ENCODE measurements at regions of chr19 and their contacts with region 1.

Region 1: DNA sequence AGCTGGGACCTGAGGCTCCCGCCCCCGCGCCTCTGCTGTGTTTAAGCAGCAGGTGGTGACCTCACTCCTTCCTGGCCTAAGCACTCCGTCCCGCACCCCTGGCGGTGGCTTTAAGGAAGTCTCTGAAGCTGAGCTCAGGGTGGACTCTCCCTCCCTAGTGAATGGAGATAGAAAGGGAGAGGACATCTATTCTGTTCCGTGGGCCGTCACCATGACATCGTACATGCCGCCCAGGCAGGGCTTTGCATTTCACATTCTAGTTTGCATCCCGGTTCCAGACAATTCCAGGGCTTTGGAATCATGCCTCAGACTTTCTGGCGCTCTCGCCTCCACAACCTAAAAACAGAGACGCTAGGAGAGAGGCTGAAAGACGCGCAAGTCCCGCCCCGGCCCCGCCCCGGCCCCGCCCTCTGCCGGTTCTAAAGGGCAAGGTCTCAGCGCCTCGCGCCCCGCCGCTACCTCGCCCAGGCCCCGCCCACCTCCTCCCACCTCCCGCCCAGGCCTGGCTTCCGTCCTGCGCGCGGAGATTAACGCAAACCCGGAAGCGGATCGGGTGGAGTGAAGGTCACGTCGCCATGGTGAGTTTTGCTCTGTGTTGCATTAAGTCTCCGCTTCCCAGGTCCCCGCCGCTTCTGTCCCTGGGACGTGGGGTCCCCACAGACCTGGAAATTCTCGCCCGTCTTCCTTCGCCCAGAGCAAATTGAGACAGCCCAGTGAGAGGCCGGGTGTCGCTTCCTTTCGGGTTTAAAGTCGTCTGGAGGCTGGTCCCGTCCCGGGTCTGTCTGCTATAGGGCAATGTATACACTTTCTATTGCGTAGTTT is at the start of gene ZNF808:
- DNase-seq: peak; percentile 93 to 100 (median 97)
- ATAC-seq: peak; percentile 93
- H3K4me3 ChIP-seq: peak within 1 kb of the TSS; percentile 95
- H3K4me3 Mint-ChIP-seq: peak within 1 kb of the TSS; percentile 99
- H3K27ac ChIP-seq: peak within 1 kb of the TSS; percentile 83 to 89
- H3K27ac Mint-ChIP-seq: peak within 1 kb of the TSS; percentile 99
- H3K4me1 ChIP-seq: peaks cover 20% of the 10 kb centered on the region
- H3K4me1 Mint-ChIP-seq: peaks cover 31% of the 10 kb centered on the region
- H3K27me3 ChIP-seq: no peaks in the 10 kb centered on the region
- H3K27me3 Mint-ChIP-seq: no peaks in the 10 kb centered on the region
- CTCF ChIP-seq: peak; percentile 35
- total RNA-seq, gene ZNF808: 13.4 to 15.3 TPM

Region 2: DNA sequence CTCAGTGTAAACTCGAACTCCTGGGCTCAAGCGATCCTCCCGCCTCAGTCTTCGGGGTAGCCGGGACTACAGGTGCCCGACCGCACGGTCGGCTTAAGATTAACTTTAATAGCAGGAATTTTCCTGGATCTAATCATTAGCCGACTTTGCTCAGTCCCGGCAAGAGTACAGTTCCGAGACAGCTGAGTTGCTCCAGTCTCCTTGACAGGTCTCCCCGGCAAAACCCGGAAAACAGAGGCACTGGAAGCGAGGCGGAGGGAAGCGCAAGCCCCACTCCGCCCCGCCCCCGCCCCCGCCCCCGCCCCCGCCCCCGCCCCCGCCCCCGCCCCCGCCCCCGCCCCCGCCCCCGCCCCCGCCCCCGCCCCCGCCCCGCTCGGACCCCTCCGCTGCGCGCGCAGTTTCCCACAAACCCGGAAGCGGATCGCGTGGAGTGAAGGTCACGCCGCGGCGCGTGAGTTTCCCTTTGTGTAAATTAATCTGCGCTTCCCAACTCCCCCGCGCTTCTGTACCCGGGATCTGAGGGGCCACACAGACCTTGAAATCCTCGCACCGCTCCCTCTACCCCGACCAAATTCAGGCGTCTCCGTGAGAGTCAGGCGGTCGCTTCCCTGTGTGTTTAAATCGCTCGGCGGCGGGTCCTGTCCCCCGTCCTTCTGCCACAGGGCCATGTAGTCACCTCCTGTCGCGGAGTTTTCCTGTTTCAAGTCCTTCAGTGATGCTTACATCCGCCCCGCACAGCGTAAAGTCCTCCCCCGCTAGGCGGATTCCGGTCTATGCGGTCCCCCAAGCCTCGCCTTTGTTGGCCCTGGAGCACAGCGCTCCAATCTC is 230.4 kb before region 1 on chr19 and contains the start of gene ZNF480:
- CTCF ChIA-PET with region 1: no interaction called
- POLR2A ChIA-PET with region 1: no interaction called
- intact Hi-C with region 1: loop called in 1 of 2 experiments (anchors 2 kb)
- DNase-seq: peak; percentile 81 to 93 (median 87)
- ATAC-seq: peak; percentile 92
- H3K4me3 ChIP-seq: peak within 1 kb of the TSS; percentile 80
- H3K4me3 Mint-ChIP-seq: peak within 1 kb of the TSS; percentile 99
- H3K27ac ChIP-seq: peak within 1 kb of the TSS; percentile 87 to 95
- H3K27ac Mint-ChIP-seq: peak within 1 kb of the TSS; percentile 99
- H3K4me1 ChIP-seq: peaks cover 20% of the 10 kb centered on the region
- H3K4me1 Mint-ChIP-seq: peaks cover 18% of the 10 kb centered on the region
- H3K27me3 ChIP-seq: no peaks in the 10 kb centered on the region
- H3K27me3 Mint-ChIP-seq: peaks cover 4% of the 10 kb centered on the region
- CTCF ChIP-seq: no peak
- total RNA-seq, gene ZNF480: 4.8 to 5.3 TPM

Region 3: GRCh38 chr19:52397310-52398080 is 129.8 kb before region 1 on chr19 and contains the start of gene ZNF528:
- CTCF ChIA-PET with region 1: no interaction called
- POLR2A ChIA-PET with region 1: no interaction called
- intact Hi-C with region 1: loop called in 1 of 2 experiments (anchors 5 kb)
- DNase-seq: peak; percentile 84 to 95 (median 92)
- ATAC-seq: peak; percentile 97
- H3K4me3 ChIP-seq: peak within 1 kb of the TSS; percentile 71
- H3K4me3 Mint-ChIP-seq: peak within 1 kb of the TSS; percentile 93
- H3K27ac ChIP-seq: peak within 1 kb of the TSS; percentile 25 to 62
- H3K27ac Mint-ChIP-seq: peak within 1 kb of the TSS; percentile 93
- H3K4me1 ChIP-seq: peaks cover 20% of the 10 kb centered on the region
- H3K4me1 Mint-ChIP-seq: peaks cover 20% of the 10 kb centered on the region
- H3K27me3 ChIP-seq: no peaks in the 10 kb centered on the region
- H3K27me3 Mint-ChIP-seq: no peaks in the 10 kb centered on the region
- CTCF ChIP-seq: no peak
- total RNA-seq, gene ZNF528: 16.3 to 16.9 TPM

Region 4: DNA sequence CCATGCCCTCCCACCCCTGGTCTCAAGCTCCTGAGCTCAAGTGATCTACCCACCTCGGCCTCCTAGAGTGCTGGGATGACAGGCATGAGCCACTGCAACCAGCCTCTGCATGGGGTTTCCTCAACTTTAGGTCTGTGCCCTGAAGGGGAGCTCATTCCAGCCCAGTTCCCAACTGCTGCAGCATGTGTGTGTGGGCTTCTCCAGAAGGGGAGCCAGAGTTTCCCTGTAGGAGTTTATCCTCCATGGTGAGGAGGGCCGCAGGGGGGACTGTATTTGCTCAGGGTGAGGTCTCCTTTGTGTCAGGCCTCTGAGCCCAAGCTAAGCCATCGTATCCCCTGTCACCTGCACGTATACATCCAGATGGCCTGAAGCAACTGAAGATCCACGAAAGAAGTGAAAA is 11.2 kb before region 1 on chr19:
- CTCF ChIA-PET with region 1: no interaction called
- POLR2A ChIA-PET with region 1: no interaction called
- intact Hi-C with region 1: no loop called
- DNase-seq: no peak
- ATAC-seq: no peak
- H3K4me3 ChIP-seq: no peak overlapping the region
- H3K4me3 Mint-ChIP-seq: no peak overlapping the region
- H3K27ac ChIP-seq: no peak overlapping the region
- H3K27ac Mint-ChIP-seq: no peak overlapping the region
- H3K4me1 ChIP-seq: no peaks in the 10 kb centered on the region
- H3K4me1 Mint-ChIP-seq: no peaks in the 10 kb centered on the region
- H3K27me3 ChIP-seq: no peaks in the 10 kb centered on the region
- H3K27me3 Mint-ChIP-seq: no peaks in the 10 kb centered on the region
- CTCF ChIP-seq: no peak

Region 5: DNA sequence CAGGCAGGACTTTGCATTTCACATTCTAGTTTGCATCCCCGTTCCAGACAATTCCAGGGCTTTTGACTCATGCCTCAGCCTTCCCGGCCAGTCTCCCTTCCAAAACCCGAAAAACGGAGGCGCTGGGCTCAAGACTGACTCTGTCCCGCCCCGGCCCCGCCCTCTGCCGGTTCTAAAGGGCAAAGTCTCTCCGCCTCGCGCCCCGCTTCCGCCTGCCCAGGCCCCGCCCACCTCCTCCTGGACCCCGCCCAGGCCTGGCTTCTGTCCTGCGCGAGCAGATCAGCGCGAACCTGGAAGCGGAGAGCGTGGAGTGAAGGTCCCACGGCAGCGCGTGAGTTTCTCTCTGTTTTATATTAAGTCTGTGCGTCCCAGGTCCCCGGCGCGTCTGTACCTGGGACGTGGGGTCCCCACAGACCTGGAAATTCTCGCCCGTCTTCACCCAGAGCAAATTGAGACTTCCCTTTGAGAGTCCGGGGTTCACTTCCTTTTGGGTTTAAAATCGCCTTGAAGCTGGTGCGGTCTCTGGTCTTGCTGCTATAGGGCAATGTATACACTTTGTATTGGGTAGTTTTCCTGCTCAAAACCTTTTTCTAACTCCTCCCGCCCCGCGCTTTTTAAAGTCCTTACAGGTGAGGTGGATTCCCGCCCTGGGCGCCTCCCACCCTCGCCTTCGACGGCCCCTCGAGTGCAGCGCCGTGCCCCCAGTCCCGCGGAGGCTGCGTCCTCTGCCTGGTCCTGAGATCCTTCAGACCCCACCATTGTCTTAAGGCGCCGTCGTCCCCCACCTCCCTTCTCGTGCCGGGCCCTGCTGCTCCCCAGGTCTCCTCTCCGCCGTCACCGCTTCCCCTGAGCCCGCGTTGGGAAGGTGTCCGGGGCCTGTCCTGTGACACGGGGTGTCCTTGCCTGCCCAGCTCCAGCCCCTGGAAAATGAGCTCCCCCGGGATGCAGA is 74.0 kb after region 1 on chr19:
- CTCF ChIA-PET with region 1: interaction called, 3 read pairs
- POLR2A ChIA-PET with region 1: no interaction called
- intact Hi-C with region 1: loop called in 1 of 2 experiments (anchors 2 kb)
- DNase-seq: peak; percentile 87 to 97 (median 93)
- ATAC-seq: peak; percentile 99
- H3K4me3 ChIP-seq: peak overlapping the region; percentile 94
- H3K4me3 Mint-ChIP-seq: peak overlapping the region; percentile 89
- H3K27ac ChIP-seq: peak overlapping the region; percentile 35 to 68
- H3K27ac Mint-ChIP-seq: peak overlapping the region; percentile 86
- H3K4me1 ChIP-seq: peaks cover 26% of the 10 kb centered on the region
- H3K4me1 Mint-ChIP-seq: peaks cover 45% of the 10 kb centered on the region
- H3K27me3 ChIP-seq: no peaks in the 10 kb centered on the region
- H3K27me3 Mint-ChIP-seq: no peaks in the 10 kb centered on the region
- CTCF ChIP-seq: peak; percentile 66

Region 6: GRCh38 chr19:52690369-52691214 is 163.2 kb after region 1 on chr19:
- CTCF ChIA-PET with region 1: no interaction called
- POLR2A ChIA-PET with region 1: no interaction called
- intact Hi-C with region 1: loop called in 1 of 2 experiments (anchors 5 kb)
- DNase-seq: peak; percentile 82 to 97 (median 90)
- ATAC-seq: peak; percentile 95
- H3K4me3 ChIP-seq: peak overlapping the region; percentile 82
- H3K4me3 Mint-ChIP-seq: peak overlapping the region; percentile 90
- H3K27ac ChIP-seq: peak overlapping the region; percentile 58 to 71
- H3K27ac Mint-ChIP-seq: peak overlapping the region; percentile 89
- H3K4me1 ChIP-seq: peaks cover 21% of the 10 kb centered on the region
- H3K4me1 Mint-ChIP-seq: peaks cover 34% of the 10 kb centered on the region
- H3K27me3 ChIP-seq: no peaks in the 10 kb centered on the region
- H3K27me3 Mint-ChIP-seq: no peaks in the 10 kb centered on the region
- CTCF ChIP-seq: no peak

Region 7: DNA sequence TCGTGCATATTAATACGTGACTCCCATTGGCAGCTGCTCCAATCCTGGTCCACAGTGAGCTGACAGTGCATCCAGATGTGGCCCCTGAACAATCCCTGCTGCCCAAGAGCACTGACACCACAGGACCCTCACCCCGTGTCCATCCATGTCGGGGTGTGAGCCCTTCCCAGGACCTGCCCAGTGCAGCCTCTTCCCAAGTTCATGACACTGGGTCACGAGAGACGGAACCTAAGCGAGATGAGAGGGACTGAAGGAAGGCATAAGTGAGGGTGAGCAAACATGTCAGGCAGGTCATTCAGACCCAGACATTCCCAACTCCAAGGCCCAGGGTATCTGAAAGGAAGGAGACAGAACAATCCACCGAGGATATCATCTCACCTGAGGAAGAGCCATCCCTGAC is 326.5 kb after region 1 on chr19:
- CTCF ChIA-PET with region 1: no interaction called
- POLR2A ChIA-PET with region 1: no interaction called
- intact Hi-C with region 1: loop called in 1 of 2 experiments (anchors 10 kb)
- DNase-seq: no peak
- ATAC-seq: no peak
- H3K4me3 ChIP-seq: no peak overlapping the region
- H3K4me3 Mint-ChIP-seq: no peak overlapping the region
- H3K27ac ChIP-seq: no peak overlapping the region
- H3K27ac Mint-ChIP-seq: no peak overlapping the region
- H3K4me1 ChIP-seq: peaks cover 11% of the 10 kb centered on the region
- H3K4me1 Mint-ChIP-seq: peaks cover 33% of the 10 kb centered on the region
- H3K27me3 ChIP-seq: no peaks in the 10 kb centered on the region
- H3K27me3 Mint-ChIP-seq: no peaks in the 10 kb centered on the region
- CTCF ChIP-seq: no peak

Region 8: GRCh38 chr19:53103198-53103944 is 576.0 kb after region 1 on chr19 and contains the start of gene ZNF160:
- CTCF ChIA-PET with region 1: no interaction called
- POLR2A ChIA-PET with region 1: no interaction called
- intact Hi-C with region 1: loop called in 1 of 2 experiments (anchors 5 kb)
- DNase-seq: peak; percentile 97 to 100 (median 99)
- ATAC-seq: peak; percentile 90
- H3K4me3 ChIP-seq: peak within 1 kb of the TSS; percentile 81
- H3K4me3 Mint-ChIP-seq: peak within 1 kb of the TSS; percentile 97
- H3K27ac ChIP-seq: peak within 1 kb of the TSS; percentile 85 to 90
- H3K27ac Mint-ChIP-seq: peak within 1 kb of the TSS; percentile 96
- H3K4me1 ChIP-seq: peaks cover 27% of the 10 kb centered on the region
- H3K4me1 Mint-ChIP-seq: peaks cover 45% of the 10 kb centered on the region
- H3K27me3 ChIP-seq: no peaks in the 10 kb centered on the region
- H3K27me3 Mint-ChIP-seq: no peaks in the 10 kb centered on the region
- CTCF ChIP-seq: no peak
- total RNA-seq, gene ZNF160: 42.1 to 45.5 TPM

Measured in CD4-positive, alpha-beta T cell (primary cell).